ENCODE measurements at regions of chr4 and their contacts with region 1.

Region 1: GRCh38 chr4:9691238-9692065 is 90.0 kb upstream of the DRD5 start:
- DNase-seq: peak; percentile 98
- H3K4me3 ChIP-seq: peak overlapping the region; percentile 41 to 59 (median 57)
- H3K27ac ChIP-seq: peak overlapping the region; percentile 78 to 84 (median 82)
- H3K4me1 ChIP-seq: no peaks in the 10 kb centered on the region
- H3K27me3 ChIP-seq: no peaks in the 10 kb centered on the region
- CTCF ChIP-seq: no peak
- EP300 ChIP-seq: no peak
- POLR2A ChIP-seq: no peak

Region 2: DNA sequence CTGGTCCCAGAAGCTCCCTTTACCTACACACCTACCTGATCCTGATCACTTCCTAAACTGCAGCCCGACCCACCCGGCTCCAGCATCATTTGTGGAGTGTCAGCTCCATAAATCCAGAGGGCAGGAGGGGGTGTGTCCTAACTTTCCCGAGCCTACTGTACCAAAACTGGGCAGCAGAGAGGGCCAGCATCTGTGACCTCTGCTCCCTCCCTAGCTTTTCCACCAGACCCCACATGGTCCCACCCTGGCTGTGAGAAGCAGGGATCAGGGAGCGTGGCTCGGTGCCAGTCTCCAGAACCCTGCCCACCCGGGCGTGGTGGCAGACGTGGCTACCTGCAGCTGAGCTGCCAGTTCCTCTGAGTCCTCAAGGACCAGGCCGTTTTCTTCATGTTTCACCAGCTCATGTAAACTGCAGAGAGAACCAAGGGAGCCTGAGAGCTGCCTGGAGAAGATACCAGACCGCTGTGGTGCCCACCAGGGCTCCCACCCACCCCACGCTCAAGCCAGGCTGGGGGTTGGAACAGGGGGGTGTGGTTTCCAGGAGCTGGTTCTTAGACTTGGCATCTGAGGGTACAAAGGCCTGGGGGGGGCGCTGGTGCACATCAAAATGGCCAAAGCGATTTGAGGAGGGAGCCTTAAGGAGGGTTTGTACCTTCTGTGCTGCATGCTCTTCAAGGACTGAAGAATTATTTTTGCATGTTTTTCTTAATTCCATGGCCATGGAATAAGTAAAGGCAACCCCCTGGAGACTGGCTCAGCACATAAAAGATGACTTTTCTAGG is 13.3 kb after region 1 on chr4:
- intact Hi-C with region 1: no loop called
- DNase-seq: no peak
- H3K4me3 ChIP-seq: no peak overlapping the region
- H3K27ac ChIP-seq: no peak overlapping the region
- H3K4me1 ChIP-seq: no peaks in the 10 kb centered on the region
- H3K27me3 ChIP-seq: no peaks in the 10 kb centered on the region
- CTCF ChIP-seq: no peak
- EP300 ChIP-seq: no peak
- POLR2A ChIP-seq: no peak

Region 3: GRCh38 chr4:9931146-9931545 is 239.7 kb after region 1 on chr4:
- intact Hi-C with region 1: no loop called
- DNase-seq: no peak
- H3K4me3 ChIP-seq: no peak overlapping the region
- H3K27ac ChIP-seq: no peak overlapping the region
- H3K4me1 ChIP-seq: no peaks in the 10 kb centered on the region
- H3K27me3 ChIP-seq: no peaks in the 10 kb centered on the region
- CTCF ChIP-seq: no peak
- EP300 ChIP-seq: no peak
- POLR2A ChIP-seq: no peak

Region 4: GRCh38 chr4:10063544-10064300 is 372.3 kb after region 1 on chr4:
- intact Hi-C with region 1: loop called (anchors 5 kb)
- DNase-seq: peak; percentile 89
- H3K4me3 ChIP-seq: no peak overlapping the region
- H3K27ac ChIP-seq: peak overlapping the region; percentile 16 to 62 (median 54)
- H3K4me1 ChIP-seq: peaks cover 0 to 14% (median 12%) of the 10 kb centered on the region in 4 donors
- H3K27me3 ChIP-seq: no peaks in the 10 kb centered on the region
- CTCF ChIP-seq: peak; percentile 29 to 62 (median 47)
- EP300 ChIP-seq: no peak
- POLR2A ChIP-seq: no peak

Region 5: DNA sequence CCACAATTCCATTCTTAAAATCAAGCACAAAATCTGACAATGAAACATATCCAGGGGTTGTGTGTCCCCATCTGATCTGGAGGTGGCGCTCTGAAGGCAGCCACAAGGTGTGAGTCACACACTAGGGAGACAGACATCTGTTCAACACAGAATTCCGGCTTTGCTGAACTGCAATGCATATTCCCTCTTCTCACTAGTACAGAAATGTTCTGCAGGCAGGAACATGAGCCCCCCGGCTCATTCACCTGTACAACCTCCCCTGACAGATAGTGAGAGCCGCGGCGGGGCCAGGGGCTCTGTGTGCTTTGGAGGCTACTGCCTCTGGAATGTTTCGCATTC is 383.3 kb after region 1 on chr4:
- intact Hi-C with region 1: no loop called
- DNase-seq: peak; percentile 45
- H3K4me3 ChIP-seq: no peak overlapping the region
- H3K27ac ChIP-seq: peak overlapping the region in 3 of 4 donors; percentile 22 to 42 (median 28)
- H3K4me1 ChIP-seq: peaks cover 0 to 16% (median 4%) of the 10 kb centered on the region in 4 donors
- H3K27me3 ChIP-seq: no peaks in the 10 kb centered on the region
- CTCF ChIP-seq: no peak
- EP300 ChIP-seq: no peak
- POLR2A ChIP-seq: no peak